A549 (cell line): ENCODE measurements at regions of chr6 and their contacts with region 1.

Region 1: GRCh38 chr6:148144917-148145521 is 197.6 kb upstream of the SASH1 start:
- DNase-seq: peak; percentile 12 to 71
- ATAC-seq: peak in 1 of 2 experiments; percentile 62; a peak in 2 of 6 replicates
- H3K4me3 ChIP-seq: no peak overlapping the region
- H3K27ac ChIP-seq: no peak overlapping the region
- H3K4me1 ChIP-seq: peaks cover 11% of the 10 kb centered on the region
- CTCF ChIP-seq: peak; percentile 51
- EP300 ChIP-seq: no peak
- POLR2A ChIP-seq: no peak
- RAD21 ChIP-seq: peak in 1 of 2 experiments; percentile 48; a peak in 4 of 5 replicates

Region 2: DNA sequence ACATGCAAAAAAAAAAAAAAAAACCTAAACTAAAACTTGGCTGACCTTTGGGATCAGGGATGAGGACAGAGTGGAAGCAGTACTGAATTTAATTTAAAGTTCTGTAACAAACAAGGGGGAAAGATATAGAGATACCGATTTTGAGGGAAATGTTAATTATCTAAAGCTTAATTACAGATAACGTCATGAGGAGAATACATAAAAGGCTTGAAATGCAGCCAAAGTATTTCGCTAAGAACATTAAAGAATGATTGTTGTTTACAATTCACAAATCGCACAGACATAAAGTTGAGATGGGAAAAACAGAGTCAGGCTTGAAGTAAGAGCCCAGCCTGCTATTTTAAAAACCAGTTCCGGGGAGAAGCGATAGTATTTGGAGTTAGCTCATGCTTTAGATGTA is 10.4 kb before region 1 on chr6:
- CTCF ChIA-PET with region 1: interaction called, 11 read pairs
- POLR2A ChIA-PET with region 1: no interaction called
- DNase-seq: no peak
- ATAC-seq: no peak
- H3K4me3 ChIP-seq: no peak overlapping the region
- H3K27ac ChIP-seq: peak overlapping the region in 1 of 2 experiments; percentile 37; a peak in 2 of 6 replicates
- H3K4me1 ChIP-seq: peaks cover 24% of the 10 kb centered on the region
- CTCF ChIP-seq: no peak
- EP300 ChIP-seq: no peak
- POLR2A ChIP-seq: no peak
- RAD21 ChIP-seq: no peak